WTC11 (cell line): ENCODE measurements at regions of chr20 and their contacts with region 1.

Region 1: GRCh38 chr20:44733341-44734069 is 12.2 kb upstream of the KCNK15 start:
- DNase-seq: peak; percentile 84
- ATAC-seq: peak; percentile 43
- H3K4me3 Mint-ChIP-seq: no peak overlapping the region
- H3K27ac Mint-ChIP-seq: no peak overlapping the region
- H3K4me1 Mint-ChIP-seq: peaks cover 42% of the 10 kb centered on the region
- H3K27me3 Mint-ChIP-seq: no peaks in the 10 kb centered on the region; the same call in 1 of the 2 replicates
- CTCF ChIP-seq: peak; percentile 77

Region 2: DNA sequence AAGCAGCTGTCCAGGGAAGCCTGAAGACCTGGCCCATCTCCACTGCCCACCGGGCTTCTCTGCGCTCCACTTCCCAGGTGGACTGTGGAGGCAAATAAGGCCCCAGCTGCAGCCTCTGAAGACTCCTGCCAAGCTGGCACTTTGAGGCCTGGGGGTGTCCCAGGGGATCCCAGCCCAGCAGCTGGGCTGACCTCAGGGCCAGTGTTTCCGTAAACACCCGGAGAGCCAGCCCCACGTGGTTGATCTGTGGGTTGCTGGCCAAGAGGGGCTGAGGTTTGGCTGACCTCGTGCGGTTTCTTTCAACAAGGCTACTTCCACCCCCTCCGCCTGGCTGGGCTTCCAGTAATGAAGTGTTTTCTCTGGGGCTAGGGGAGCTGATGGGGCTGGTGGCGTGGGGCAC is 30.7 kb before region 1 on chr20:
- CTCF ChIA-PET with region 1: interaction called, 12 read pairs
- POLR2A ChIA-PET with region 1: no interaction called
- DNase-seq: no peak
- ATAC-seq: no peak
- H3K4me3 Mint-ChIP-seq: no peak overlapping the region
- H3K27ac Mint-ChIP-seq: no peak overlapping the region
- H3K4me1 Mint-ChIP-seq: peaks cover 22% of the 10 kb centered on the region
- H3K27me3 Mint-ChIP-seq: no peaks in the 10 kb centered on the region
- CTCF ChIP-seq: no peak

Region 3: DNA sequence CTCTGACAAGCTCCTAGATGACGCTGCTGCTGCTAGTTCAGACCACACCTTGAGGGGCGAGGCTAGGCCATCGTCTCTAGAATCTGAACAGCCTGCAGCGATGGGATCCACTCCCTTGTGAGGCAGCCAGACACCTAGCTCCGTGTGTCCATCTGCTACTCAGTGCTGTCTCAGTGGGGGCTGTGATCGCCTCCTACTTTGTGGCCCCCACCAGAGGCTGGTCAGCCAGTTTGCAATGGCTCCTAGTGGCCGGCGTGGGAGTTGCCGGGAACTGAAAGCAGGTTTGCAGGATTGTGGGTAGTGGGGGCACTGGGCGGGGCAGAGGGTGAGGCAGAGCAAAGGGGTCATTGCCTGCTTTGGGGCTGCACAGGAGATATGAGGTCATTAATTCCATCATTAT is 15.5 kb before region 1 on chr20:
- CTCF ChIA-PET with region 1: interaction called, 24 read pairs
- POLR2A ChIA-PET with region 1: no interaction called
- DNase-seq: peak; percentile 68
- ATAC-seq: peak; percentile 86
- H3K4me3 Mint-ChIP-seq: no peak overlapping the region
- H3K27ac Mint-ChIP-seq: no peak overlapping the region
- H3K4me1 Mint-ChIP-seq: no peaks in the 10 kb centered on the region
- H3K27me3 Mint-ChIP-seq: no peaks in the 10 kb centered on the region
- CTCF ChIP-seq: 0 out of 2 replicates have a peak, but pooled peaks have one; percentile 22

Region 4: DNA sequence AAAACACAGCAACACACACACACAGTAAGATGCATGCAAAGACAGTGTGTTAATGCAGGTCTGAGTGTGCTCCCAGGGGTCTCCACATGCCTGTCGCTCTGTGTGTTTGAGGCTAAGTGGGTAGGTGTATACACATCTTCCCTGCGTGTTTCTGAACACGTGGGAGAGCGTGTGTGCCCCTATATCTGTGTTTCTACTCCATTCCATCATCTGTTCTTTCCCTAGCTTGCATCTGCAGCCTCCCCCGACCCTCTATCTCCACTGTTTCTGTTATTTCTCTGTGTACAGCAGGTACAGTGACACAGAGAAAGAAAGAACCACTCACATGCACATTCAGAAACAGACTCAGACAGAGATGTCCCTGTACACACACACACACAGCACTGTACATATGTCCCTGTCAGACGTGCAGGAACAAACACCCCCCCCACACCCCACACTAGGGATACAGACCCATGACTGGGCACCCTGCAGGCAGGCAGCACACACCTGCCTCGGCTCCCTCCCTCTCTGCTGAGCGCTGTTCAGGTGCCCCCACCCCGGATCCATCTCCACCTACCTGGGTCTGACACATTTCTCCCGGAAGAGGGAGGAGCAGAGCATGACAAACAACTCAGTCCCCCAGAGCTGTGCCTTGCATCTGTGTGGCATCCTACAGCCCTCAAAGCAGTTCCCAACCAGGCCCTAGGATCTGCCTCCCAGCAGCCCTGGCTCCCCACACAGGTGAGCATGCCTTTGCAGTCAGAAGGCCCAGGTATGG is 39.7 kb after region 1 on chr20:
- CTCF ChIA-PET with region 1: no interaction called
- POLR2A ChIA-PET with region 1: no interaction called
- DNase-seq: no peak
- ATAC-seq: no peak
- H3K4me3 Mint-ChIP-seq: no peak overlapping the region
- H3K27ac Mint-ChIP-seq: no peak overlapping the region
- H3K4me1 Mint-ChIP-seq: no peaks in the 10 kb centered on the region
- H3K27me3 Mint-ChIP-seq: no peaks in the 10 kb centered on the region
- CTCF ChIP-seq: no peak